Activated naive CD4-positive, alpha-beta T cell treated with anti-CD3 and anti-CD28 coated beads for 36 hours (primary cell): ENCODE measurements at regions of chr3 and their contacts with region 1.

Region 1: DNA sequence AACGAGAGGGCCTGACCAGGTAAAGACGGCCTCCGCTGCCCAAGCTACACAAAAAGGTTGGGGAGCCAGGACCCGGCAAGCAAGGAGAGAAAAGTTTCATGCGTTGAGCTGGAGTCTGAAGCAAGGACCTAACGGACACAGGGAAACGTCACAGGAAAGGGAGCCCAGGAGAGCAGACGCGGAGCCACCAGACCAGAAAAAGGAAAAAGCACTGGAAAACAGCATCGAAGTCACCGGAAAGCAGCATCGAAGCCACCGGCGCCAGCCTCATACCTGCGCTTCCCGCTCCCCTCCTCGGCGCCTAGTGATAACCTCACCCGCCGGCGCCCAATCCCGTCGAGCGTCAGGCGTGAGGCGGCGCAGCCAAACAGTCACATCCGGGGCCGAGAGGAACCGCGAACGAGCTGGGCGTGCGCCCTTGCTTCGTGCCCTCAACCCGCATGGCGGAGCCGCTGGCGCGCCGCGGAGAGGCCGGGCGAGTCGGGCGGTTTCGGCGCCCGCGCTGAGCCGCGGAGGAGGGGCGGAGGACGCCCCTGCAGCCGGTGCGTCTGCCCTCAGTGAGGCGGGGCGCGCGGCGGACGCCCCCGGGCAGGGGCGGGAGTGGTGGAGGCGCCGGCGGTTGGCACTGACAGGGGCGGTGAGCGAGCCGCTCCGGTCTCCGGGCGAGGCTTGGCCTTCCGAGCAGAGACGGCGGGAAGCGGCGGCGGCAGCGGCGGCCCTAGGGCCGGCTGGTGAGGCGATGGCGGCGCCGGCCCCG is at the starts of genes FBXO45 and WDR53:
- DNase-seq: peak; percentile 97
- H3K4me3 Mint-ChIP-seq: peak within 1 kb of the TSS; percentile 98
- H3K27ac Mint-ChIP-seq: peak within 1 kb of the TSS; percentile 91
- H3K4me1 Mint-ChIP-seq: peaks cover 46% of the 10 kb centered on the region
- H3K27me3 Mint-ChIP-seq: no peaks in the 10 kb centered on the region
- total RNA-seq, gene FBXO45: 11.8 to 12.8 TPM
- total RNA-seq, gene WDR53: 14.3 to 15.8 TPM

Region 2: DNA sequence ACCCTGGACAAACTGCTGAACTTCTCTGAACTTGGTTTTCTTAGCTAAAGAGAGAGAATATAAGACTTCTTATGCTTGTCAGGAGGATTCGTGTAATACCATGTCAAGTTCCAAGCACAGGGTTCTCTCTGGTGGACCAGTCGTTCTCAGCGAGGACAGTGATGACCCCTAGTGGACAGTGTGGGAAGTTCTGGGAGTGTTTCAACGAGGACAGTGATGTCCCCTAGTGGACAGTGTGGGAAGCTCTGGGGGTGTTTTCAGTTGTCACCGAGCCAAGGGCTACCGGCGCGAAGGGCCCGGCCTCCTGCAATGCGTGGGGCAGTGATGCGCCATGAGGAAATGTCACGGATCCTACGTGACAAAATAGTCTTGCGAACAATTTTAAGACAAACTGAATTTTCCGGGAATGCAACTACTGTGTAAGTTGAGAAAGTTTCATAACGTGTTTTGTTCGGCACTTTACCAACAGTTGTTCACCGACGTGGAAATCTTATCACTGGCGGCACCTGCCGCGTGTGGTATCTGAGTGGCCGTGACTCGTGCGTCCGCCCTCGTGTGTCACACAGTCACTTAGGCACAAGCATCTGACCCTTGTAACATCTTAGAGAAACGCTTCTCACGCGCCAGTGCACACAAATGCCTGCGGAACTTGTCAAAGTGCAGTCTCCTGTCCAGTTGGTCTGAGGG is 717.4 kb before region 1 on chr3:
- CTCF ChIA-PET with region 1: no interaction called
- intact Hi-C with region 1: loop called (anchors 5 kb)
- DNase-seq: peak; percentile 96
- H3K4me3 Mint-ChIP-seq: peak overlapping the region; percentile 18
- H3K27ac Mint-ChIP-seq: no peak overlapping the region
- H3K4me1 Mint-ChIP-seq: peaks cover 2% of the 10 kb centered on the region
- H3K27me3 Mint-ChIP-seq: no peaks in the 10 kb centered on the region

Region 3: GRCh38 chr3:196432137-196432879 is 136.1 kb before region 1 on chr3 and contains the start of gene UBXN7:
- CTCF ChIA-PET with region 1: no interaction called
- intact Hi-C with region 1: loop called (anchors 2 kb)
- DNase-seq: peak; percentile 97
- H3K4me3 Mint-ChIP-seq: peak within 1 kb of the TSS; percentile 69
- H3K27ac Mint-ChIP-seq: peak within 1 kb of the TSS; percentile 93
- H3K4me1 Mint-ChIP-seq: peaks cover 15% of the 10 kb centered on the region
- H3K27me3 Mint-ChIP-seq: no peaks in the 10 kb centered on the region
- total RNA-seq, gene UBXN7: 54.2 to 62.5 TPM

Region 4: DNA sequence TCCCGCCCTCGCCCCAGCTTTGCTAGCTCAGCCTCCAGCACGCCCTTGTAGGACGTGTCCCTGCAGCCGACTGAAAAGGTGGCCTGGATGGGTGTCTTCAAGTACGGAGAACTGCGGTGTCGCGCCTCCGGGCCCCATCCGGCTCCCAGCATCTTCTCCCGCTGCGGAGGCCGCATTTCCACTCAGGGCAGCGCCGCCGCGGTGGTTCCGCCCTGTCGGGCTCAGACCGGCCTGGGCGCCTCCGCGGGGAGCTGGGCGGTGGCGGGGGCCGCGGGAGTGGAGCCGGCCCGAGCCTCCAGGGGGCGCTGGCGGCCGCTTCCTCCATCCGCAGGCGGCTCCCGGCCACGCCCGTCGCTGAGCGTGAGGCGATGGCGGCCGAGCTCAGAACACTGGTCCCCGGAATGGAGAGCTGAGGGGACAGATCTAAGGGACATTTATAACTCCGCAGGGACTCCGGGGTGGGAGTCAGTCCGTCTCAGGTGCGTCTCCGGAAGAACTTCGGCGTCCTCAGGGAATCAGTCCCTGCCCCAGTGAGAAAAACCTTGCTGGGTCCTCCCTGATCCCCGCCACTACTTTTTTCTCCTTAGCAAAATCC is 39.7 kb before region 1 on chr3:
- CTCF ChIA-PET with region 1: interaction called, 10 read pairs
- intact Hi-C with region 1: loop called (anchors 2 kb)
- DNase-seq: peak; percentile 87
- H3K4me3 Mint-ChIP-seq: peak overlapping the region; percentile 74
- H3K27ac Mint-ChIP-seq: peak overlapping the region; percentile 36
- H3K4me1 Mint-ChIP-seq: peaks cover 6% of the 10 kb centered on the region
- H3K27me3 Mint-ChIP-seq: peaks cover 2% of the 10 kb centered on the region

Region 5: DNA sequence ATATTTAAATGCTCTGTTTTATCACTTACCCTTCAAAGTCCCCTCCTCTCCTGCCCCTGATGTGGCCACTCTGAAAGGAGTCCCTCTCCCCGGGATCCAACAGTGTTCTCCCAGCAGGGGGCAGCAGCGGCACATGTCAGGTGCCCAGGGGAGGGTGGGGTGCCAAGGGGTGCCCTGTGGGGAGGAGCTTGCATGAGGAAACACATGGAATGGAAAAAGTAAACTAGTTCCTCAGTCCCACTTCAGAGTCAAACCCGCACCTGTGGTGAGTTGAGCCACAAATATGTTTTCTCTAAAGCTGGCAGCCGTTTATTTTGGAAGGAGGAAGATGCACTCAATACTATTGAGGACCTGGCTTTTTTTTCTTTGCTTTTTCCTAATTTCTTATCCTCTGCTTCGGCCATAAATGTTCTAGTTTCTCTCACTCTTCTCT is 40.9 kb after region 1 on chr3:
- CTCF ChIA-PET with region 1: no interaction called
- intact Hi-C with region 1: loop called (anchors 2 kb)
- DNase-seq: peak; percentile 96
- H3K4me3 Mint-ChIP-seq: peak overlapping the region; percentile 35
- H3K27ac Mint-ChIP-seq: peak overlapping the region; percentile 21
- H3K4me1 Mint-ChIP-seq: peaks cover 33% of the 10 kb centered on the region
- H3K27me3 Mint-ChIP-seq: no peaks in the 10 kb centered on the region

Region 6: GRCh38 chr3:196711838-196712513 is 143.6 kb after region 1 on chr3 and contains the starts of genes CEP19 and PIGX:
- CTCF ChIA-PET with region 1: no interaction called
- intact Hi-C with region 1: loop called (anchors 1 kb)
- DNase-seq: peak; percentile 94
- H3K4me3 Mint-ChIP-seq: peak within 1 kb of the TSS; percentile 83
- H3K27ac Mint-ChIP-seq: peak within 1 kb of the TSS; percentile 92
- H3K4me1 Mint-ChIP-seq: peaks cover 34% of the 10 kb centered on the region
- H3K27me3 Mint-ChIP-seq: no peaks in the 10 kb centered on the region
- total RNA-seq, gene CEP19: 3.1 to 4.4 TPM
- total RNA-seq, gene PIGX: 30.7 to 32.8 TPM